SK-MEL-5 (cell line): ENCODE measurements at regions of chr6 and their contacts with region 1.

Region 1: DNA sequence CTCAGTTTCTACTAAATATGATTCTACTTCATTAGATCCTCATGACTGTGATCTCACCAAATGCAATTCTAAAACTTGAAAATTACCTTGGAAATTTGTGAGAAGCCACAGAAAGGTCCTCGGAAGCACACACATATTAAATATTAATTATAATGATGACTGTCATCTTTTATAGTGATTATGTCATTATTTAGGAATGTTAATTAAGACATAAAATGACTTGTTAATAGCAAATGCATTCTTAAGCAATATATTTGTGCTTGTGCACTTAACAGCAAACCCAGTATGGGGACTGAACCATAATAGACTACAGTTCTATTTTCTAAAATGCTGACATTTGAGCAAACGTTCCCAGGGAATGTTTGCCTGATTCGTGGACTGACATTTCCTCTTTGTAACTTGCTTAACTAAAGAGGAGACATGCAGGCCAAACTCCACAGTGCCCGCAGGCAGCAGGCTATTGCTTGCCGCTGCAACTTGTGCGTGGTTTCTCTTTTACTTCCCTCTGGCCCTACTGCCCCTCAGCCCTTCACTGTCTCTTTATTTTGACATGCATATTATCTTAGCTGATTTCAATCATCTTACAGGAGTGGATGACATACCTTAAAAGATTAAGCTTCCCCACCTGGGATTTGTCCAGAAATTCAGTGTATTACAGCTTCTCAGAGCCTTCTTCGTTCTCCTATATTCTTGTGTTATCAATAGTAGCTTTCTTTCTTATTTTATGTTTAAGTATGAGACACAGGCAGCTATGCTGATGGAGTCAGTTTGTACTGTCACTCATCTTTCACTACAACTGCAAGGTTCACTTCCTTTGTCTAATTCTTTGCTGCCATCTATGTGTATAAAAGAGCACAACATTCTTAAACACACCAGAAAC is 141.5 kb downstream of the GMDS start:
- DNase-seq: peak; percentile 91

Region 2: DNA sequence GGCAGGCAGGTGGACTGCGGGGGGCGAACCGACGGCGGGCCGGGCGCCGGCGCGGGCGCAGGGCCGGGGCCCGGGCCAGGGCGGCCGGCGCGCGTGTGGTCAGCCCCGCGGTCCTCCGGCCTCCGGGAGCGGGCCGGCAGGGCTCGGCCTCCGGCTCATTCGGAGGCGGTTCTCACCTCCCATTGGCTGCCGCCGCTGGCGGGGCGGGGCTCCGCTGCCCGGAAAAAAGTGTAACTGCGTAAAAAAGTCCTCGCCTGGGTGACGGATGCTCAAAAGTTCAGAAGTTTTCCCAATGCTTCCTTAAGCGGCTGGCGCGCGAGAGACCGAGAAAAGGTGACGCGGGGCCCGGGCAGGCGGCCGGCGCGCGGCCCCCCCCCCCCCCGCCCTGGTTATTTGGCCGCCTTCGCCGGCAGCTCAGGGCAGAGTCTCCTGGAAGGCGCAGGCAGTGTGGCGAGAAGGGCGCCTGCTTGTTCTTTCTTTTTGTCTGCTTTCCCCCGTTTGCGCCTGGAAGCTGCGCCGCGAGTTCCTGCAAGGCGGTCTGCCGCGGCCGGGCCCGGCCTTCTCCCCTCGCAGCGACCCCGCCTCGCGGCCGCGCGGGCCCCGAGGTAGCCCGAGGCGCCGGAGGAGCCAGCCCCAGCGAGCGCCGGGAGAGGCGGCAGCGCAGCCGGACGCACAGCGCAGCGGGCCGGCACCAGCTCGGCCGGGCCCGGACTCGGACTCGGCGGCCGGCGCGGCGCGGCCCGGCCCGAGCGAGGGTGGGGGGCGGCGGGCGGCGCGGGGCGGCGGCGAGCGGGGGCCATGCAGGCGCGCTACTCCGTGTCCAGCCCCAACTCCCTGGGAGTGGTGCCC is 494.0 kb before region 1 on chr6 and contains the start of gene FOXC1:
- in situ Hi-C with region 1: loop called (anchors 10 kb)
- DNase-seq: peak; percentile 95
- total RNA-seq, gene FOXC1: 9.4 and 10.3 TPM in 2 replicates